ENCODE measurements at regions of chr3 and their contacts with region 1.

Region 1: DNA sequence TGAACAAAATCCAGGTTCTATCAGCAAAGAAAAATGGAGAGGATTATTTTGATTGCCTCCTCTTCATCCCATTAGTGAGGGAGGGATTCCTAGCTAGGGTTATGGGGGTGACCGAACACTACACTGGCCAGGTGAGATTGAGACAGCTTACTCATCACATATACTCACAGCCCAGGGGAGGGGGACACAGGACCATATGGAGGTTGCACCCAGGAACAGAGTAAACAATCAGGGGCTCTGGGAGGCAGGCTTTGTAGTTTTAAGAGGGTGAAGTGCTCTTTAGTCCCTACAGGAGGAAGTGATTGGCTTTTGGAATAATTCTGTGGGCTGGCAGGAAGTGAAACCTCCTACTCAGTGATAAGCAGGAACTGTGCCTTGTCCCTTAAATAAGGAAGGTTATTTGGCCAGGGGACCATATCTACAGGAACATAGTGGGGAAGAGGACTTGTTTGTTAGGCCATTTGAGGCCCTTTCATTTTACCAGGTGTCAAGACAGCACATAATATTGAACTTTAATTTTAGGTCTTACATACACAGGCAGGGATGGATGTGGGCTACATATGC is 17.5 kb upstream of the KCTD6 start:
- DNase-seq: no peak

Region 2: DNA sequence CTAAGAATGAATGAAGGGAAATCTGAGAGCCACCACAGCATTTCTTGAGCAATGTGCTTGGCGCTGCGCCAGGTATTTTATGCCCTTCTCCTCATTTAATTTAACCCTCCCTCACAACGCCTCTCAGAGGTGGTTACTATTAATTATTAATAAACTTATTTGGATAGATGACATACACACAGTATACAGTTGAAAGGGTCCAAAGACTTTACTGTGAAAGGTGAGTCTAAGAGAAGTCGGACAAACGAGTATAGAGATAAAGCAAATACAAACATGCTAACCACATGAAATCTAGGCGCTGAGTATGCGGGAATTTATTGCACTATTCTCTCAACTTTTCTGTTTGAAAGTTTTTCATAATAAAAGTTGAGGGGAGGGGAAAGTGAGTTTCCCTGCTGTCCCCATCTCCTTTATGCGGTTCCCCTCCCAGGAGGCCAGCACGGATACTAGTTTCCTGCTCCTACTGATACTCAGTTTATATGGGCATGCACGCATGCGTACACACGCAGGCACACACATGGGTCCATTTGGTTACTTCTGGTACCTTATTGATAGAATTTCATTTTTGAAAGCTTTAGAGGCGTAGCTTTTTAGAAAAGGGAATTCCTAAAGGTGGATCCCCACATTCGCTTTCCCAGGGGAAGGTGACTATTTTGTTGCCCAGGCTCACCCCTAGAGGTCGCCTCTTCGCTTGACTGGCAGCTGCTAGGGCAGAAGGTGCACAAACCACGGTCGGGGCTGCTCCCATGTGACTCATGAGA is 11.1 kb before region 1 on chr3:
- CTCF ChIA-PET with region 1: interaction called, 12 read pairs
- POLR2A ChIA-PET with region 1: no interaction called
- DNase-seq: peak; percentile 82

Region 3: DNA sequence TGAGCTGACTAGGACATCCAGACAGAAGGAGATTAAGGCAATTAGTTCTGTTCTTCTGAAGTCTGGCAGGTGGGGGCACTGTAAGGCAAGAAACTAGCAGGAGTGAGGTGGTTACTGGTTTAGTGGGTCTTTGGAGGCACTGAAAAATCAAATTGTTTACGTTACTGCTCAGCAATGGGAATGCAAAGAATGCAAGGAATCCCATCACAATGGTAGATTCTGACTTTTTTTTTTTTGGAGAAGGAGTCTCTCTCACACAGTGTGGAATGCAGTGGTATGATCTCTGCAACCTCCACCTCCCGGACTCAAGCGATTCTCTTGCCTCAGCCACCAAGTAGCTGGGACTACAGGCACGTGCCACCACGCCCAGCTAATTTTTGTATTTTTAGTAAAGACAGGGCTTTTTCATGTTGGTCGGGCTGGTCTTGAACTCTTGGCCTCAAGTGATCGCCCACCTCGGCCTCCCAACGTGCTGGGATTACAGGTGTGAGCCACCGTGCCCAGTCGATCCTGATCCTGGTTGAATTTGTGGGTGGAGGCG is 86.4 kb after region 1 on chr3:
- CTCF ChIA-PET with region 1: no interaction called
- POLR2A ChIA-PET with region 1: no interaction called
- DNase-seq: peak; percentile 33